Sciatic nerve (tissue), 2 donors: ENCODE measurements at regions of chr6 and their contacts with region 1.

Region 1: GRCh38 chr6:62707156-62707555 is 421.1 kb upstream of the KHDRBS2 start:
- DNase-seq: no peak
- ATAC-seq: no peak

Region 2: DNA sequence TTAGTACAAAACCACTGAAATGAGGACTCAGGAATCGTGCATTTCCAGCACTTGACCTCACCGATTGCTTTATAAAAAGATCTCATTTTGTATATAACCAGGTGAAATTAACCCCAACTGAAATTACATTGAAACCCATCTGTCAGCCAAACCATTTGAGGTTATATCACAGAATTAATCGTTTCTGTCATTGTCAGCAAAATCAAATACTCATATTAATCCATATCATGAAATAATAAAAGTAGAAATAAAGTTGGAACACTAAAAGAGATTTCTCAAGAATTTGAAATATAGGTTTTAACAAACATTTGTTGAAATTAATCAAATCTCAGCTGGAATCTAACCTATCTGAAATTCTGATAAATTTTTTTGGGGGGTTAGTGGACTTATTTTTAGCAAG is 444.9 kb before region 1 on chr6:
- intact Hi-C with region 1: loop called (anchors 5 kb)
- DNase-seq: no peak
- ATAC-seq: no peak

Region 3: DNA sequence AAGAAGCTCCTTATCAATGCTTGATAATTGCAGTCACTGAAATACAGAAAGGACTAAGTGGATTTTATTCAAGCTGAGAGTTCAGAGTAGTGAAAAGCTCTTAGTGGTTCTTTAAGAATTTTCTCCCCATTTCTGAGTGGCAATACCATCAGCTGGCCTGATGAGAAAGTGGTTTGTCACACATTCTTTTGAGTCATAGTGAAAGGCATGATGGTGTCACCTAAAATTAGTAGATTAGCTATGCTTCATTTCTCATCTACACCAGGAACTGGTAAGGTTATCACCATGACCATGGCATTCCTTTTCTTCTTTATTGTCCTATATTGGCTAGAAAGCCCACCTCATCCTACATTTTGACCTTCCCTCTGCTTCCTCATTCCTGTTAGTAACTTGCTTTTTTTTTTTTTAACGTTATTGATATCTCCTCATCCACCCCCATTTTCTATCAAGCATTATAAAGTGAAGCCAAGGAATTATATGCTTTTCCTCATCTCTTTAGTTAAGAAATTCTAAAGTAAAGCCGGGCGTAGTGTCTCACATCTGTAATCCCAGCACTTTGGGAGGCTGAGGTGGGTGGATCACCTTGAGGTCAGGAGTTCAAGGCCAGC is 797.7 kb after region 1 on chr6:
- intact Hi-C with region 1: no loop called
- DNase-seq: no peak
- ATAC-seq: no peak

Region 4: GRCh38 chr6:64293298-64293697 is 1586.1 kb after region 1 on chr6:
- intact Hi-C with region 1: no loop called
- DNase-seq: no peak
- ATAC-seq: no peak